ENCODE measurements at regions of chr5 and their contacts with region 1.

Region 1: GRCh38 chr5:180784497-180785097 is 18.0 kb downstream of the MGAT1 start:
- DNase-seq: peak; percentile 68 to 81 (median 72)
- H3K4me3 ChIP-seq: no peak overlapping the region
- H3K4me3 Mint-ChIP-seq: no peak overlapping the region
- H3K27ac ChIP-seq: no peak overlapping the region
- H3K27ac Mint-ChIP-seq: peak overlapping the region in 2 of 7 donors; percentile 6 to 14
- H3K4me1 ChIP-seq: peaks cover 8% of the 10 kb centered on the region
- H3K4me1 Mint-ChIP-seq: peaks cover 10 to 25% (median 18%) of the 10 kb centered on the region in 4 donors
- H3K27me3 ChIP-seq: no peaks in the 10 kb centered on the region
- H3K27me3 Mint-ChIP-seq: no peaks in the 10 kb centered on the region

Region 2: DNA sequence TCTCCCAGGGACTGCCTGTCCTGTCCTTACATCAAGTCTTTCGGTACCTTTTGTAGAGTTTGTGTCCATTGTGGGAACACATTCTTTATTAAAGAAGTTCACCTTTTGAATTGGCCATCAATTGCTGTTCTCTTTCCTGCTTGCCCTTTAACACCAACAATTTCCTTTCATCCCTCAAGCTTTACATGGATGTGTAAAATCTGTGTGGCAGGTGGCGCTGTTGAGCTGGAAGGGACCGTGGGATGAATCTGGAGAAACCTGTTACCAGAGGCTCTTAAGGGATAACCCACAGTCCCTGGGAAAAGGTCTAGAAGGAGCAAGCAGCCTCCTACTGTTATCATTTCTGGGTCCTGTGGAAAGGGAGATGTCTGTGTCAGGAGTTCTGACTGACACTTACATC is 84.4 kb after region 1 on chr5:
- CTCF ChIA-PET with region 1: interaction called, 7 read pairs
- POLR2A ChIA-PET with region 1: interaction called, 6 read pairs
- intact Hi-C with region 1: loop called (anchors 1 kb)
- DNase-seq: peak; percentile 32 to 64 (median 37)
- H3K4me3 ChIP-seq: no peak overlapping the region
- H3K4me3 Mint-ChIP-seq: no peak overlapping the region
- H3K27ac ChIP-seq: no peak overlapping the region
- H3K27ac Mint-ChIP-seq: no peak overlapping the region
- H3K4me1 ChIP-seq: peaks cover 4% of the 10 kb centered on the region
- H3K4me1 Mint-ChIP-seq: peaks cover 0 to 11% (median 5%) of the 10 kb centered on the region in 4 donors
- H3K27me3 ChIP-seq: no peaks in the 10 kb centered on the region
- H3K27me3 Mint-ChIP-seq: peaks cover 3 to 6% of the 10 kb centered on the region in 2 donors

Measured in CD4-positive, alpha-beta memory T cell (primary cell).